ENCODE measurements at regions of chr13 and their contacts with region 1.

Region 1: DNA sequence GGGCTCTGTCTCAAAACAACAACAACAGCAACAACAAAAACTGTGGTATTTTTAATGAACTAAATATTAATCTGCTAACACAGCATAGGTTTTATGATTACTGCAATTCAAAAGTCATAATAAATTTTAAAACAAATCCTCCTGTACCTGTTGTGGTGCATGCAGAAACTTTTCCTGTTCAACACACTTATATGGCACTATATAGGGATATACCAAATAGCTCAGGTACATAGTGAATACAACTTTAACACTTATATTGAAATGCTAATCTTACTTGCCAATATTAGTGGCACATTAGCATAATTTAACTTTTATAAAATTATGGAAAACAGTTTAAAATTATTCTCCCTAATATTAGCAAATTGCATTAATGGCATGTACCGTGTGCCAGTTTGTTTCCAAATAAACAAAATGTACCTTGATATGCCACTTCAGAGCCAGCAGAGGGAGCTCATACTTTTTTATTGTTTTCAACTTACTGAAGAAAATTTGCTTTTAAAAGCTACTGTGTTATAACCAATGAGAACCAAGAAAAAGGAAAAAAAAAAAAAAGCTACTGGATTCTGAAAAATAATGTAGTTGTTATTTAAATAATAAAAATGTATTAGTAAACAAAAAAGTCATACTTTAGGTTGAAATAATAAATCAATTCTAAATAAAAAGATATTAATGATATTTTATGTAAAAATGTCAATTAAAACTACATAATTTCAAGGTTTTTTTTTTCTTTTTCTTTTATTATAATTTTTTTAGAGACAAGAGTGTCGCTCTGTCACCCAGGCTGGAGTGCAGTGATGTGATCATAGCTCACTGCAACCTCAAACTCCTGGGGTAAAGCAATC is 18.0 kb upstream of the RBM26 start:
- DNase-seq: peak; percentile 50
- ATAC-seq: peak; percentile 53
- H3K4me3 ChIP-seq: no peak overlapping the region
- H3K4me3 Mint-ChIP-seq: no peak overlapping the region
- H3K27ac ChIP-seq: no peak overlapping the region
- H3K27ac Mint-ChIP-seq: no peak overlapping the region
- H3K4me1 ChIP-seq: no peaks in the 10 kb centered on the region
- H3K4me1 Mint-ChIP-seq: no peaks in the 10 kb centered on the region
- H3K27me3 ChIP-seq: no peaks in the 10 kb centered on the region
- H3K27me3 Mint-ChIP-seq: no peaks in the 10 kb centered on the region
- CTCF ChIP-seq: peak; percentile 91

Region 2: GRCh38 chr13:79393564-79394249 is 30.3 kb before region 1 on chr13:
- CTCF ChIA-PET with region 1: interaction called, 11 read pairs
- POLR2A ChIA-PET with region 1: no interaction called
- intact Hi-C with region 1: no loop called
- DNase-seq: peak; percentile 90
- ATAC-seq: peak; percentile 92
- H3K4me3 ChIP-seq: peak overlapping the region in 4 of 5 experiments; percentile 7 to 51 (median 38)
- H3K4me3 Mint-ChIP-seq: peak overlapping the region; percentile 76
- H3K27ac ChIP-seq: peak overlapping the region; percentile 87 to 88
- H3K27ac Mint-ChIP-seq: peak overlapping the region; percentile 85
- H3K4me1 ChIP-seq: peaks cover 28 to 44% of the 10 kb centered on the region in 2 donors
- H3K4me1 Mint-ChIP-seq: peaks cover 62% of the 10 kb centered on the region
- H3K27me3 ChIP-seq: no peaks in the 10 kb centered on the region
- H3K27me3 Mint-ChIP-seq: no peaks in the 10 kb centered on the region
- CTCF ChIP-seq: no peak

Region 3: DNA sequence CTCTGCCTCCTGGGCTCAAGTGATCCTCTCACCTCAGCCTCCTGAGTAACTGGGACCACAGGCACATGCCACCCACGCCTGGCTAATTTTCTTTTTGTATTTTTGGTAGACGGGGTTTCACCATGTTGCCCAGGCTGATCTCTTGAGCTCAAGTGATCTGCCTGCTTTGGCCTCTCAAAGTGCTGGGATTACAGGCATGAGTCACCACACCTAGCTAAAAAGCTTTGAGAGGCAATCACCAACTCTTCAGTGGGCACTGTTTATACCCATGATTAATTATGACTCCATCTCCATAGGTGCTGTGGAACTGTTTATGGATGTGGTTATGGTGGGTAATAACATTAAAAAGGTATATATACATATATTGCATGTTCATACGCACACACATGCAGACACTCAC is 10.5 kb before region 1 on chr13:
- CTCF ChIA-PET with region 1: interaction called, 16 read pairs
- POLR2A ChIA-PET with region 1: interaction called, 3 read pairs
- intact Hi-C with region 1: no loop called
- DNase-seq: no peak
- ATAC-seq: no peak
- H3K4me3 ChIP-seq: no peak overlapping the region
- H3K4me3 Mint-ChIP-seq: no peak overlapping the region
- H3K27ac ChIP-seq: no peak overlapping the region
- H3K27ac Mint-ChIP-seq: no peak overlapping the region
- H3K4me1 ChIP-seq: no peaks in the 10 kb centered on the region
- H3K4me1 Mint-ChIP-seq: peaks cover 1% of the 10 kb centered on the region
- H3K27me3 ChIP-seq: no peaks in the 10 kb centered on the region
- H3K27me3 Mint-ChIP-seq: no peaks in the 10 kb centered on the region
- CTCF ChIP-seq: no peak

Region 4: GRCh38 chr13:79440958-79441528 is 17.0 kb after region 1 on chr13:
- CTCF ChIA-PET with region 1: interaction called, 10 read pairs
- POLR2A ChIA-PET with region 1: no interaction called
- intact Hi-C with region 1: no loop called
- DNase-seq: no peak
- ATAC-seq: no peak
- H3K4me3 ChIP-seq: no peak overlapping the region
- H3K4me3 Mint-ChIP-seq: no peak overlapping the region
- H3K27ac ChIP-seq: no peak overlapping the region
- H3K27ac Mint-ChIP-seq: no peak overlapping the region
- H3K4me1 ChIP-seq: no peaks in the 10 kb centered on the region
- H3K4me1 Mint-ChIP-seq: no peaks in the 10 kb centered on the region
- H3K27me3 ChIP-seq: no peaks in the 10 kb centered on the region
- H3K27me3 Mint-ChIP-seq: peaks cover 8% of the 10 kb centered on the region
- CTCF ChIP-seq: no peak

Region 5: DNA sequence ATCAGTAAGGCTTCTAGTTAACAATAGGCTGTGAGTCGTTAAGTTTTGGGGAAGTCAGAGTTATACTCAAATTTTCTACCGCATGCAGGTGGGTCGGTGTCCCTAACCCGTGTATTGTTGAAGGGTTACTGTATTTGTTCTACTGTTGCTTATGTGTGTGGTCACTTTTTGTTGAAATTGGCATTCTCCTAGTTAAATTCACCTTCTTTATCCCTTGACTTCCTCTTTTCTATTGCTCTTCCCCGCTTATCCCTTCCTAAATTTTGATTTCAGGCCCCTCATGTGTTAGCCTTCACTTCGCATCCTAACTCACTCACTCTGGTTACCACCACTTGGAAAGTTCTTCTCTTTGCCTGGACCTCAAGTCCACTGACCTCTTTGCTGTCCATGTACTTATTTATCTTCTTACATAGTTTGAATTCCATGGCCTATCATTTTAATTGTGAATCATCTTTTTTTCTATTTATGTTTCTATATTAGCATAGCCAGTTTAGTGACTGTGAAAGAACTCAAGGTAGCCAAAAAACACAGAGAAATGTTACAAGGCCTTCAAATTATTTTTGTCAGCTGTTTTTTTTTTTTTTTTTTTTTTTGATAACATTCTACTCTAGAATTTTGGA is 109.9 kb after region 1 on chr13:
- CTCF ChIA-PET with region 1: interaction called, 122 read pairs
- POLR2A ChIA-PET with region 1: no interaction called
- intact Hi-C with region 1: no loop called
- DNase-seq: no peak
- ATAC-seq: no peak
- H3K4me3 ChIP-seq: no peak overlapping the region
- H3K4me3 Mint-ChIP-seq: no peak overlapping the region
- H3K27ac ChIP-seq: no peak overlapping the region
- H3K27ac Mint-ChIP-seq: no peak overlapping the region
- H3K4me1 ChIP-seq: no peaks in the 10 kb centered on the region
- H3K4me1 Mint-ChIP-seq: no peaks in the 10 kb centered on the region
- H3K27me3 ChIP-seq: no peaks in the 10 kb centered on the region
- H3K27me3 Mint-ChIP-seq: no peaks in the 10 kb centered on the region
- CTCF ChIP-seq: no peak

Measured in B cell (primary cell).